HCT116 (cell line): ENCODE measurements at regions of chr9 and their contacts with region 1.

Region 1: DNA sequence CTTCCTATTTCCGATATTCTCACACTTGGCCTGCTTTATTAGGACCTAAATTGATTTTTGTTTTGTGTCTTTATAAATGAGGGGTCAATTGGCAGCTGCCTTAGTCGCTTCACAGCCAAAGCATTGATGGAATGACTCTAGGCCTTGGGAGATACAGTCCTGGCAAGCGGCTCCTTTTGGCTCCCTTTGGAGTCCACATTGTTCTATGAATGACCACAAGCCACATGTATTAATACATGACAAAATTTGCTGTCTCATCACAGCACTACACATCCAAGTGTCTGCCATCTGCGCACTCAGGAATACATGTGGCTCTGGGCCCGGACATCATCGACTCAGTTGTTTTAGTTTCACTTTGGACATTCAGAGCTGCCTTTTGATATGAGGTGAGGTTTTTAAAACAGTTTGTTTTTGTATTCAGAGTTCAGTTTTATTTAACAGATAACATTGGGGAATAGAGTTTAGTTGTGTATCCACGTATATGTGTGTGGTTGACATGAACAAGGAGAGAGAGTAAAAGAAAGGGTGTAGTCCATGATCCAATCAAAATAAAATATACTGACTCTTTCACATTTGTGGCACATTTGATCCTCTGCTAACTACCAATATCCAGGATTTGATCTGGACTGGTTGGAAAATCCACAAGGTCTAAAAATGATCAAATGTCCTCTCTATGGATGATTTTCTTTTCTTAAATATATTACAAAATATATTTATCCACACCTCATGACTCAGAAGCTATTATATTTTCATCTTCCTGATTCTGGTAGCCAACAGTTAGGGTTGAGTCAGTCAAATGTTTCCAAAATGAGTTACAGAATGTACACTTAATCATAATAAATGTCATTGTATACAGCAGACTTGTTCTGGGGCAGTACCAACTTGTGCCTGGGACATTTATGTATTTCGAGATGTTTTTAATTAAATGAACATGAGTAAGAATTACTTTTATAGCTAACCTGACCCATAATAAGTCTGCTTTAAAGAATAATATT is 114.0 kb upstream of the MTAP start:
- DNase-seq: no peak
- ATAC-seq: no peak
- H3K4me3 ChIP-seq: peak overlapping the region in 1 of 2 experiments; percentile 11; a peak in 1 of 4 replicates
- H3K27ac ChIP-seq: peak overlapping the region; percentile 99
- H3K4me1 ChIP-seq: peaks cover 85 to 100% of the 10 kb centered on the region in 2 experiments
- H3K27me3 ChIP-seq: no peaks in the 10 kb centered on the region
- CTCF ChIP-seq: no peak
- POLR2A ChIP-seq: no peak
- RAD21 ChIP-seq: no peak

Region 2: DNA sequence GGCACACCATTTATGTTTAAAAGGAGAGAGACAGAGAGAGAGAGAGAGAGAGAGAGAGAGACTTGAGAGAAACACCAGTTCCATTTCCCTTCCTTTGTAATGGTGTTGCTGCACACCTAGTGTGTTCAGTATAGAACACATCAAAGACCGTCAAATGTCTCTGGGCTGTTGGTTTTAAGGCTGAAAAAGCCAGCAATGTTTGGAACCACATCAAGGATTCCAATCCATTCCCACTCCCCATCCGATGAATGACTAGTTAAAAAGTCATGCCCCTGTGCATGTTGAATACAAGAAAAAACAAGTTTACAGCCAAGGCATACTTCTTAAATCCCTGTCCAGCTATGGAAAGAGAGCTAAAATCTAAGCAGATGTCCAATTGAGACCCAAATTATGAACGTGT is 123.2 kb before region 1 on chr9:
- CTCF ChIA-PET with region 1: no interaction called
- POLR2A ChIA-PET with region 1: interaction called, 64 read pairs
- RAD21 ChIA-PET with region 1: no interaction called
- intact Hi-C with region 1: no loop called
- DNase-seq: peak; percentile 81
- ATAC-seq: peak; percentile 69
- H3K4me3 ChIP-seq: peak overlapping the region in 1 of 2 experiments; percentile 21; a peak in 2 of 4 replicates
- H3K27ac ChIP-seq: peak overlapping the region; percentile 99
- H3K4me1 ChIP-seq: peaks cover 95 to 98% of the 10 kb centered on the region in 2 experiments
- H3K27me3 ChIP-seq: no peaks in the 10 kb centered on the region
- CTCF ChIP-seq: no peak
- POLR2A ChIP-seq: no peak
- RAD21 ChIP-seq: no peak

Region 3: DNA sequence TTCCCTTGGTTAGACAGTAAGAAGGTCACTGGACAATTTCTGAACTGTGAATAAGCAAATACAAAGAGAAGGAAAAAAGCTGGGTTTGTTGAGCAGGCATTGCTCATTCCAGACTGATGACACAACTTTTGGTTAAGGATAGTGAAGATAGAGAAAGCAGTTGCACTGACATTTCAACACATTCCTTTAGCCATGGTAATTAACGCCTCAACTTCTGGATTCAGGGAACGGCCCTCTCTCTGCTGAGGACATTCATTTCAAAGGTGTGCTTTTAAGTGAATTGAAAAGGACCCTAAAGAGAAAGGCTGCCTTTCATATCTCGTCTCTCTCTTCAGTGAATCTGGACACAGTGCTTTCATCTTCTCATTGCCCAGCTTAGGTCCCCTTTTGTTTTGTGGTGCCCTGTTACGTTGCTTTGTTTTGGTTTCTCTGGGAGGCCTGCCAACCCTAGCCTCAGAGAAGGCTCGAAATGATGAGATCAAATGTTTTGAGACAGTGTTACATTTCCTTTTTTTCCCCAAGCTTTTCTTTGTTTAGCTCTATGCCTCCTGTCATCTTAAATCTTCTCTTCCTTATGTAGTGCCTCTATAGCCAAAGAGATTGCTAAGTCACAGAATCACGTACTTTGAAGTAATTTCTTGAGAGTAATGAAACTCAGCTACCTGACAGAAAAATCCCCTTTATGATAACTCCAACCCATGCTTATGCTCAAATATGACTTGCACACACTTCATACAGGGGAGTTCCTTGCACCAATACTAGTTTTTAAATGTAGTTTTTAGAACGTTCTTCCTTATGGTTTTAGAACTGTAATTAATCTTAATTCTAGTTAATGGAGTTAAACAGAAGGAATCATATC is 111.8 kb before region 1 on chr9:
- CTCF ChIA-PET with region 1: no interaction called
- POLR2A ChIA-PET with region 1: interaction called, 154 read pairs
- RAD21 ChIA-PET with region 1: no interaction called
- intact Hi-C with region 1: no loop called
- DNase-seq: peak; percentile 93
- ATAC-seq: peak; percentile 76
- H3K4me3 ChIP-seq: peak overlapping the region in 1 of 2 experiments; percentile 8; a peak in 1 of 4 replicates
- H3K27ac ChIP-seq: peak overlapping the region; percentile 99
- H3K4me1 ChIP-seq: peaks cover 89 to 100% of the 10 kb centered on the region in 2 experiments
- H3K27me3 ChIP-seq: no peaks in the 10 kb centered on the region
- CTCF ChIP-seq: no peak
- POLR2A ChIP-seq: no peak
- RAD21 ChIP-seq: peak; percentile 33

Region 4: DNA sequence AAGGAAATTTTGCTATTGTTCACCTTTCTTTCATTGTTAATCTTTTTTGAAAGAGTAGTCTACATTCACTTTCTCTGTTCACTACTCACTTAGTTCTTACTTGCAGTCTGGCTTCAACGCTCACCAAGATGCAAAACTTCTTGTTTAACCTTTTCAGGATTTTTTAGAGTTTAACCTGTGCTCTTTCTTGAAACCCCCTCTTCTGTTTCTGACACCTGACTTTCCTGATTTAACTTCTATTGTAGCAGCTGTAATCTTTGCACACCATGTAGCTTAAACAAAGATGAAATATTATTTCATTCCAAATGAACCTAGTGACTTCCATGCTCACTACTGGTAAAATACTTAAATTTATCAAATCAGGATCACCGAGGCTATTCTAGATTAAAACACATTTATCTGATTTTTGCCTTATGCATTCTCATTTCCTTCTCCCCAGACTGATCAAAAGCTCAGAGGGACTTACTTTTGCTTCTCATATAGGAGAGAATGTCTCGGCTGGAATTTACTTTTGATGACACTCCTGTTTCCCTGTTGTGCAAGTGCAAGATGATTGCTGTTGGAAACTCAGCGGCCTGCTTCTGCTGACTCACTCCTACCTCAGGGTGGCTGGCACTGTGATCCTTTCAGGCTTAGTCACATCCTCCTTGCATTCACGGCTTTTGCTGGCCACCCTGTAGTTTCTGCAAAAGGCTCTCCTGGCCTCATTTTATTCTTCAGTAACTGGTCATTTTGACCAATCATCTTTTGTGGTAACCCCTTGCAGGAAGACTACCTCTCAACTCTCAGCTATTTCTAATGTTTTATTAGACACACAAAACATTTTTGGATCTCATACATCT is 97.0 kb before region 1 on chr9:
- CTCF ChIA-PET with region 1: no interaction called
- POLR2A ChIA-PET with region 1: interaction called, 65 read pairs
- RAD21 ChIA-PET with region 1: no interaction called
- intact Hi-C with region 1: loop called (anchors 1 kb)
- DNase-seq: peak; percentile 94
- ATAC-seq: peak; percentile 82
- H3K4me3 ChIP-seq: peak overlapping the region; percentile 51 to 66
- H3K27ac ChIP-seq: peak overlapping the region; percentile 99
- H3K4me1 ChIP-seq: peaks cover 64 to 98% of the 10 kb centered on the region in 2 experiments
- H3K27me3 ChIP-seq: no peaks in the 10 kb centered on the region
- CTCF ChIP-seq: no peak
- POLR2A ChIP-seq: no peak
- RAD21 ChIP-seq: peak; percentile 43; the same call in 1 of the 2 replicates

Region 5: GRCh38 chr9:21777701-21778100 is 89.3 kb after region 1 on chr9:
- CTCF ChIA-PET with region 1: no interaction called
- POLR2A ChIA-PET with region 1: interaction called, 71 read pairs
- RAD21 ChIA-PET with region 1: no interaction called
- intact Hi-C with region 1: loop called (anchors 2 kb)
- DNase-seq: peak; percentile 73
- ATAC-seq: peak; percentile 79
- H3K4me3 ChIP-seq: peak overlapping the region; percentile 19 to 44
- H3K27ac ChIP-seq: peak overlapping the region; percentile 92
- H3K4me1 ChIP-seq: peaks cover 69 to 86% of the 10 kb centered on the region in 2 experiments
- H3K27me3 ChIP-seq: no peaks in the 10 kb centered on the region
- CTCF ChIP-seq: no peak
- POLR2A ChIP-seq: no peak
- RAD21 ChIP-seq: 0 out of 2 replicates have a peak, but pooled peaks have one; percentile 11